IMR-90 (cell line): ENCODE measurements at regions of chr9 and their contacts with region 1.

Region 1: GRCh38 chr9:109817846-109818472 is 38.0 kb downstream of the PALM2AKAP2 start:
- DNase-seq: peak; percentile 99
- ATAC-seq: peak; percentile 66
- H3K4me3 ChIP-seq: no peak overlapping the region
- H3K27ac ChIP-seq: peak overlapping the region; percentile 54
- H3K4me1 ChIP-seq: peaks cover 21% of the 10 kb centered on the region
- H3K27me3 ChIP-seq: no peaks in the 10 kb centered on the region
- CTCF ChIP-seq: peak; percentile 97
- POLR2A ChIP-seq: peak; percentile 60; the same call in 1 of the 2 replicates
- RAD21 ChIP-seq: peak; percentile 88

Region 2: DNA sequence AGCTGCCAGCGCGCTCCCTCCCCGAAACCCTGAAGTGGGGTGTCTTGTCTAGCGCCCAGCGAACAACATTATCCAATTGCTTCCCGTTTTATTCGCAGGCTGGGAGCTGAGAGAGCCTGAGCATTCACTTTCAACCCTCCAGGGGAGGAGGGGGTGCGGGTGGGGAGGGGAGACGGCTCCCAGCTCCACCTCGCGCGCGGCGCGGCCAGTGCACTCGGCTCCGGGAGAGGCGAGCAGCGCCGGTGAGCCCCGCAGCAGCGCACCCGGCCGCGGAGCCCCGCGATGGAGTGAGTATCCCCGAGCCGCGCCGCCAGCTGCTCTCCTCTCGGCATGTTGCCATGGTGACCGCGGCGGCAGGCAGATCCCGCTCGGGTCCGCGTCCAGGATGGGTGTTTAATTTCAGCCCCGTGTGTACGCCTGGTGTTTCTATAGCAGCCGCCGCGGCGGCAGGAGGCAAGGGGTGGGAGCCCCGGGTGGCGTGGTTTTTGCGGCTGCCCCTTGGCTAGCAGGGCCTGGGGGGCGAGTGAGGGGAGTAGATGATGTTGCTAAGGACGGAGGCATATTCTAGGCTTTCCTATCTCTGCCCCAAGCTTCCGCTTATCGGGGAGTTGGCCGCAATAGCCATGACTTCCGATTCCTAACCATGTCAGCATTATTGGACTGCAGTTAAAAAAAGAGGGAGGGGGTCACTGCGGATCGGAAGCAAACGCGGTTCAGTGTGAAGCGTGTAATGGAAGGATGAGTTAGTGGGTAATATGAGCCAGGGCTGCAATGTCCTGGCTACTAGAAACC is 177.2 kb before region 1 on chr9:
- CTCF ChIA-PET with region 1: no interaction called
- POLR2A ChIA-PET with region 1: interaction called, 11 read pairs
- dilution Hi-C with region 1: no loop called
- in situ Hi-C with region 1: no loop called
- intact Hi-C with region 1: no loop called
- DNase-seq: peak; percentile 22
- ATAC-seq: peak; percentile 85
- H3K4me3 ChIP-seq: peak overlapping the region; percentile 31
- H3K27ac ChIP-seq: no peak overlapping the region
- H3K4me1 ChIP-seq: peaks cover 3% of the 10 kb centered on the region; the same call in 1 of the 2 replicates
- H3K27me3 ChIP-seq: peaks cover 63% of the 10 kb centered on the region
- CTCF ChIP-seq: no peak
- POLR2A ChIP-seq: no peak
- RAD21 ChIP-seq: no peak

Region 3: GRCh38 chr9:109705515-109705914 is 112.4 kb before region 1 on chr9:
- CTCF ChIA-PET with region 1: no interaction called
- POLR2A ChIA-PET with region 1: no interaction called
- dilution Hi-C with region 1: no loop called
- in situ Hi-C with region 1: no loop called
- intact Hi-C with region 1: loop called (anchors 5 kb)
- DNase-seq: peak; percentile 69
- ATAC-seq: peak; percentile 90
- H3K4me3 ChIP-seq: no peak overlapping the region
- H3K27ac ChIP-seq: no peak overlapping the region
- H3K4me1 ChIP-seq: peaks cover 4% of the 10 kb centered on the region; the same call in 1 of the 2 replicates
- H3K27me3 ChIP-seq: peaks cover 10% of the 10 kb centered on the region
- CTCF ChIP-seq: no peak
- POLR2A ChIP-seq: no peak
- RAD21 ChIP-seq: peak; percentile 20; the same call in 1 of the 2 replicates

Region 4: DNA sequence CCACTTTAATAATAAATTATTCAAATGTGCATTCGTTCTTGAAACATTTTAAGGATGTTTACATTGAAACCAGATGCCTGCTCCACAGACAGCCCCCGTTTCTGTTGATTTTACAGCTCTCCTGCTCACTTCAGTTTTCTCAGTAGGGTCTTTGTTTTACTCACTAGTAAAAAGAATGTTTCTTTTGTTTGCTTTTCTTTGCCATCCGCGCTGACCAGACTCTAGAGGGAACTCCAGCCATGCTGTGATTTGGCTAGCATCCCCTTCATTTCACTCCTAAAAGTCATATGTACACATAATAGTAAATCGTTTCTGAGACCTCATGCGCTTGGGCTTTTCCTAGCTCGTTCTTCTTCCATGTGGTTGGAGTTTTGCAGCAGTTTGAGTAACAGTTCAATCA is 66.7 kb before region 1 on chr9:
- CTCF ChIA-PET with region 1: interaction called, 3 read pairs
- POLR2A ChIA-PET with region 1: no interaction called
- dilution Hi-C with region 1: no loop called
- in situ Hi-C with region 1: no loop called
- intact Hi-C with region 1: loop called (anchors 5 kb)
- DNase-seq: peak; percentile 82
- ATAC-seq: peak; percentile 82
- H3K4me3 ChIP-seq: no peak overlapping the region
- H3K27ac ChIP-seq: no peak overlapping the region
- H3K4me1 ChIP-seq: peaks cover 11% of the 10 kb centered on the region
- H3K27me3 ChIP-seq: no peaks in the 10 kb centered on the region
- CTCF ChIP-seq: peak; percentile 33
- POLR2A ChIP-seq: no peak
- RAD21 ChIP-seq: peak; percentile 39

Region 5: GRCh38 chr9:109779711-109780452 is 38.1 kb before region 1 on chr9 and contains the start of gene PALM2AKAP2:
- CTCF ChIA-PET with region 1: interaction called, 3 read pairs
- POLR2A ChIA-PET with region 1: no interaction called
- dilution Hi-C with region 1: no loop called
- in situ Hi-C with region 1: no loop called
- intact Hi-C with region 1: loop called (anchors 2 kb)
- DNase-seq: peak; percentile 68
- ATAC-seq: peak; percentile 95
- H3K4me3 ChIP-seq: peak within 1 kb of the TSS; percentile 90
- H3K27ac ChIP-seq: peak within 1 kb of the TSS; percentile 58
- H3K4me1 ChIP-seq: peaks cover 4% of the 10 kb centered on the region
- H3K27me3 ChIP-seq: no peaks in the 10 kb centered on the region
- CTCF ChIP-seq: peak; percentile 34
- POLR2A ChIP-seq: no peak
- RAD21 ChIP-seq: peak; percentile 36; the same call in 1 of the 2 replicates
- total RNA-seq, gene PALM2AKAP2: 14.2 and 20.6 TPM in 2 replicates

Region 6: GRCh38 chr9:109894921-109895758 is 77.2 kb after region 1 on chr9:
- CTCF ChIA-PET with region 1: no interaction called
- POLR2A ChIA-PET with region 1: no interaction called
- dilution Hi-C with region 1: no loop called
- in situ Hi-C with region 1: no loop called
- intact Hi-C with region 1: no loop called
- DNase-seq: peak; percentile 89
- ATAC-seq: peak; percentile 91
- H3K4me3 ChIP-seq: no peak overlapping the region
- H3K27ac ChIP-seq: no peak overlapping the region
- H3K4me1 ChIP-seq: peaks cover 5% of the 10 kb centered on the region; the same call in 1 of the 2 replicates
- H3K27me3 ChIP-seq: no peaks in the 10 kb centered on the region
- CTCF ChIP-seq: no peak
- POLR2A ChIP-seq: no peak
- RAD21 ChIP-seq: no peak

Region 7: DNA sequence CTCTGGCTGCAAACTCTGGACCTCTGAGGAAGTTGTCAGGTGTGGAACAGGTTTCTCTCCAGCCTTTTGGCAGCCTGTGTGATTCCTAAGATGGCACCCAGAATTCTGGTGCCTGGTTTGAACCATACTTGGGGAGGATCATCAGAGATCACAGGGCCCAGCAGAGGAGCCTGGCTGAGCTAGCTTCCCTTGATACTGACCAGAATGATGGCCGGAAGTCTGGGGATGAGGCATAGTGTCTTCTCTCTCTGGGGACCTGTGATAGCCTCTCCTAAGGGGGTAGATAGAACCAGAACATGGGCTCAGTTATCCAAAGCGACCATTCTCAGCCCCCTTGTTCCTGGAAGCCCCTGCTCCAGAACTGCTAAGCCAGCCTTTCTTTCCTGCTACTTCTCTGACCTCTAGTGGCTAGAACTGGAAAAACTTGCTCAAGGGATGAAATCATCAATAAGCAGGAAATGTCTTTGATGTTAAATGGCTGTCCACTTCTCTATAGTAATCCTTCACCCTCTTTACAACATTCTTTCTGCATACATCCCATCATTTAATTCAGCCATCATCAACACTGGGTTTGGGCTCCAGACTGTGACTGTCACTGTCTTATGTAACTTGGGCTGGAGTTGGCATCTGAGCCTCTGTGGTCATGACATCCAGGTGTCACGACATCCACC is 334.9 kb after region 1 on chr9:
- CTCF ChIA-PET with region 1: interaction called, 3 read pairs
- POLR2A ChIA-PET with region 1: no interaction called
- dilution Hi-C with region 1: no loop called
- in situ Hi-C with region 1: no loop called
- intact Hi-C with region 1: loop called (anchors 5 kb)
- DNase-seq: peak; percentile 72
- ATAC-seq: peak; percentile 48
- H3K4me3 ChIP-seq: no peak overlapping the region
- H3K27ac ChIP-seq: peak overlapping the region; percentile 24; the same call in 1 of the 2 replicates
- H3K4me1 ChIP-seq: peaks cover 28% of the 10 kb centered on the region
- H3K27me3 ChIP-seq: no peaks in the 10 kb centered on the region
- CTCF ChIP-seq: peak; percentile 76
- POLR2A ChIP-seq: no peak
- RAD21 ChIP-seq: peak; percentile 84